IMR-90 (cell line): ENCODE measurements at regions of chr12 and their contacts with region 1.

Region 1: DNA sequence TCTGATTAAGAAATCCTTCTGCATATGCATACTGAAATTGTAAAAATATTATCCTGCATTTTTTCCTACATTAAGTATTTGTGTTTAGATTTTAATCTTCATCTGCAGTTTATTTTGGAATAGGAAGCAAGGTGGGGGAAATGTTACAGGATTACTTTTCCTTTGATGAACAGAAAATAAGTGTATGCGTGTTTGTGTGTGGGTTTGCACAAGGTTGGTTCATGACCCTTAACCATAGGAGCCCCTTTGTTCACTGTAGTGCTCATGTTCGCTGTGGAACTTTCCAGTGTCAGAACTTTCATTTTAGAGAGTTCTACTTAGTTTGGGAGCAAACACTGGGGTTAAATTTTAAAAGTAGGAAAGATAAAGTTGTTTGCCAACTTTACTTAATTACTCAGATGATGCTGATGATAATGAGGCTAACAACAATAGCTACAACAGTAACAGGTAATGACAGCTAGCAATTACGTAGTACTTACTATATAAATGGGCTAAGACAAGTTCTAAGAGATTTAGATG is 6.4 kb upstream of the A2M start:
- DNase-seq: no peak
- ATAC-seq: no peak
- H3K4me3 ChIP-seq: no peak overlapping the region
- H3K27ac ChIP-seq: no peak overlapping the region
- H3K4me1 ChIP-seq: peaks cover 7% of the 10 kb centered on the region; the same call in 1 of the 2 replicates
- H3K27me3 ChIP-seq: peaks cover 3% of the 10 kb centered on the region; the same call in 1 of the 2 replicates
- CTCF ChIP-seq: no peak
- POLR2A ChIP-seq: no peak
- RAD21 ChIP-seq: no peak

Region 2: DNA sequence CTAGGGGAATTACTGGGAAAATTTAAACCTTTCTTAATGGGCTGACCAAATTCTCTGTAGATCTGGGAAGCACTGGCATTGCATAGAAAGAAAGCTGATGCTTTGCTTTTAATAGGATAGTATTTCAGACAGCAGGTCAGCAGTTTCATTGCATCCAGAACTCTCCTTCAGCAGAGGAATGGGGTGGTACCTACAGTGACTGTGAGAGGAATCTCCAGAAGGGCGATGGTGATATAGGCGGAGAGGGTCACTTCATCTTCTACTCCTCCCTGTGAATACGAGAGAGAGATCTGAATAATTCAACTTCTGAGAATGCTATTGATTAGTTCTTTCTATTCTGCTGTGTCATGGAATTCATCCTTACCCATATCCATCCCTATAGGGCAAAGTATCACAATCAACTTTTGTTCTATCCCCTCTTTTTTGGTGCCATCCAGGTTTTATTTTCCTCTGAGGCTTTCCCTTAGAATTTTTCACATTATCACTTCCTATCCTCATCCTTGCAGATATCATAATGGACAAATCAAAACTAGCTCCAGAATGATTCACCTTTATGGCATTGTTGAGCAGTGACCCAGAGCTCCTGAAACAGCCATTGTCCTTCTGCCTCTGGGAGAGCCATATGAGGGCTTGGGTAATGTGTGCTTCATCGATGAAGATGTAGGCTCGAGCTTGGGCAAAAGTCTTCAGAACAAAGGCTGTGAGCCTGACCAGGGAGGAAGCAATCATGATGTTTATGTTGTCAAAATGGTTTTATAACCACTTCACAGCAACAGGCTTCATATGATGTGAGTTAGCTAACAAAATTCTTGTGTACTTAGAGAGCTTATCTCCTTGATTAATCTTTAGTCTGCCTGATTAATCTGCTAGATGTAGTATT is 44.8 kb before region 1 on chr12:
- CTCF ChIA-PET with region 1: no interaction called
- POLR2A ChIA-PET with region 1: no interaction called
- dilution Hi-C with region 1: no loop called
- in situ Hi-C with region 1: no loop called
- intact Hi-C with region 1: loop called (anchors 1 kb)
- DNase-seq: no peak
- ATAC-seq: no peak
- H3K4me3 ChIP-seq: no peak overlapping the region
- H3K27ac ChIP-seq: no peak overlapping the region
- H3K4me1 ChIP-seq: no peaks in the 10 kb centered on the region
- H3K27me3 ChIP-seq: no peaks in the 10 kb centered on the region
- CTCF ChIP-seq: no peak
- POLR2A ChIP-seq: no peak
- RAD21 ChIP-seq: no peak